ENCODE measurements at regions of chr1 and their contacts with region 1.

Region 1: GRCh38 chr1:151888972-151889570 is 20.2 kb downstream of the THEM4 start:
- DNase-seq: no peak
- H3K4me3 Mint-ChIP-seq: no peak overlapping the region
- H3K27ac Mint-ChIP-seq: no peak overlapping the region
- H3K4me1 Mint-ChIP-seq: peaks cover 27% of the 10 kb centered on the region
- H3K27me3 Mint-ChIP-seq: no peaks in the 10 kb centered on the region

Region 2: GRCh38 chr1:151762941-151763921 is 125.8 kb before region 1 on chr1 and contains the start of gene MRPL9:
- CTCF ChIA-PET with region 1: no interaction called
- intact Hi-C with region 1: loop called (anchors 10 kb)
- DNase-seq: peak; percentile 91
- H3K4me3 Mint-ChIP-seq: peak within 1 kb of the TSS; percentile 86
- H3K27ac Mint-ChIP-seq: peak within 1 kb of the TSS; percentile 90
- H3K4me1 Mint-ChIP-seq: peaks cover 17% of the 10 kb centered on the region
- H3K27me3 Mint-ChIP-seq: no peaks in the 10 kb centered on the region
- total RNA-seq, gene MRPL9: 157 to 160 TPM

Region 3: DNA sequence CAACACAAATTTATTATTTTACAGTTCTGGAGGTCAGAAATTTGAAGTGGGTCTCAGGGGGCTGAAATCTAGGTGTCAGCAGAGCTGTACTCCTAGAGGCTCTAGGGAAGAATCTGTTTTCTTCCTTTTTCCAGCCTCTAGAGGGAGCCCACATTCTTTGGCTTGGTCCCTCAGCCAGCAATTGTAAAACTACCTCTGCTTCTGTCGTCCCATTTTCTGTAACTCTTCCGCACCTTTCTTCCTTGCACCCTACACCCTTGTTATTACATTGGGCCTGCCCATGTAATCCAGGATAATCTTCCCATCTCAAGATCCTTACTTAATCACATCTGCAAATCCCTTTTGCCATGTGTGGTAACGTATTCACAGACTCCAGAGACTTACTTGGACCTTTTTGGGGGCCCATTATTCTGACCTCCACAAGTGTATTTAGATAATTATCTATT is 45.0 kb after region 1 on chr1:
- CTCF ChIA-PET with region 1: interaction called, 4 read pairs
- intact Hi-C with region 1: loop called (anchors 1 kb)
- DNase-seq: peak; percentile 64
- H3K4me3 Mint-ChIP-seq: no peak overlapping the region
- H3K27ac Mint-ChIP-seq: no peak overlapping the region
- H3K4me1 Mint-ChIP-seq: no peaks in the 10 kb centered on the region
- H3K27me3 Mint-ChIP-seq: peaks cover 3% of the 10 kb centered on the region

Region 4: DNA sequence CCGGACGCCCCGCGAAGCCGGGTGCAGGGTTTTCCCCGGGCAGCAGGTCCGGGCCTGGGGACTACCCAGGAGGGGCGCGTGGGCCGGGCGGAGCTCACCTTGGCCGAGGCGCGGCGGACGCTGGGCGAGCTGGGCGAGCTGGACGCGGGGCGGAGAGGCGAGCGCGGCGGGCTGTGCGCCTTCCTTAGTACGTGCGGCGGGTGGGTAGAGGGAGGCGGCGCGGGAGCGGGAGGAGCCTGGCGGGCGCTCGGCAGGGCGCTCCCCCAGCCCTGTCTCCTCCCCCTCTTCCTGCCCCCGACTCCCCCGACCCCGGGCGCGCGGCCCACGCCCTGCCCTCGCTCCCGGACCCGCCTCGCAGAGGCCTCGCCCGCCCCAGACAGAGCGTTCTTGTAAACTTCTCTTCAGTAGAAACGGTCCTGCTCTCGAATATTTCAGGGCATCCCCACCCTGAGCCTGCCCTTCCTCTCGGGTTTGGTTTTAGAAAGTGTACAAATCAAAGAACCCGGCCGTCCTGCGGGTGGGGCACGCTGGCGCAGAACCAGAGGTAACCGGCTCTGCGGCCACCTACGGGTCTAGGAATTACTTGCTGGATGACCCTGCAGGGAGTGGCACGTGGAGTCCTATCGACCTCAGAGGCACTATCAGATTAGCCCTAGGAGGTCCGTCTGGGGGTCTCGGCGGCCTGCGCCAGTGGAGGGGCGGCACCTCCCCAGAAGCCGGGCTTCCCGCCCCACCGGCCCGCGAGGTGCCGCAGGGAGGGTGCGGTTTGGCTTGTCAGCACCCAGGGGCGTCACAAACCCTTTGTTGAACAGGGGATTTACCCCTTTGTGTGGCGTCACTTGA is 104.8 kb after region 1 on chr1 and contains the start of gene S100A10:
- CTCF ChIA-PET with region 1: interaction called, 7 read pairs
- intact Hi-C with region 1: loop called (anchors 1 kb)
- DNase-seq: peak; percentile 73
- H3K4me3 Mint-ChIP-seq: peak within 1 kb of the TSS; percentile 94
- H3K27ac Mint-ChIP-seq: peak within 1 kb of the TSS; percentile 92
- H3K4me1 Mint-ChIP-seq: peaks cover 44% of the 10 kb centered on the region
- H3K27me3 Mint-ChIP-seq: no peaks in the 10 kb centered on the region
- total RNA-seq, gene S100A10: 159 to 170 TPM